Sciatic nerve (tissue), 2 donors: ENCODE measurements at regions of chr17 and their contacts with region 1.

Region 1: DNA sequence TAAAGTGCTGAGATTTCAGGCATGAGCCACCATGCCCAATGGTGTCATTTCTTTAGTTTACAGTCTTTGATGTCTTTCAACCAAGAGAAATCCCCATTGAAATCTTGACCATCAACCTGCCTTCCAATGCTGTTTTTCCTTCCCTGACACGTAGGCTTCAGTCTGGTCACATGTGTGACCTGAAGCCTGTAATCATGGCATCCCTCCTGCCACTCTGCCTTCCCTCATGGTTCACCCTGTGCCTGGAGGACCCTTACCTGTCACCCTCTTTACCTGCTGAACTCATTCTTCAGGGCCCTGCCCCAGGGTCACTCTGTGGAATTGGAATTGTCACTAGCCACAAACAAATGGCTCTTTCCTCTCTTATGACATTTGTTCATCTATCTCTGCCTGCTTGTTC is 18.1 kb upstream of the ARHGAP23 start:
- DNase-seq: no peak
- ATAC-seq: no peak

Region 2: DNA sequence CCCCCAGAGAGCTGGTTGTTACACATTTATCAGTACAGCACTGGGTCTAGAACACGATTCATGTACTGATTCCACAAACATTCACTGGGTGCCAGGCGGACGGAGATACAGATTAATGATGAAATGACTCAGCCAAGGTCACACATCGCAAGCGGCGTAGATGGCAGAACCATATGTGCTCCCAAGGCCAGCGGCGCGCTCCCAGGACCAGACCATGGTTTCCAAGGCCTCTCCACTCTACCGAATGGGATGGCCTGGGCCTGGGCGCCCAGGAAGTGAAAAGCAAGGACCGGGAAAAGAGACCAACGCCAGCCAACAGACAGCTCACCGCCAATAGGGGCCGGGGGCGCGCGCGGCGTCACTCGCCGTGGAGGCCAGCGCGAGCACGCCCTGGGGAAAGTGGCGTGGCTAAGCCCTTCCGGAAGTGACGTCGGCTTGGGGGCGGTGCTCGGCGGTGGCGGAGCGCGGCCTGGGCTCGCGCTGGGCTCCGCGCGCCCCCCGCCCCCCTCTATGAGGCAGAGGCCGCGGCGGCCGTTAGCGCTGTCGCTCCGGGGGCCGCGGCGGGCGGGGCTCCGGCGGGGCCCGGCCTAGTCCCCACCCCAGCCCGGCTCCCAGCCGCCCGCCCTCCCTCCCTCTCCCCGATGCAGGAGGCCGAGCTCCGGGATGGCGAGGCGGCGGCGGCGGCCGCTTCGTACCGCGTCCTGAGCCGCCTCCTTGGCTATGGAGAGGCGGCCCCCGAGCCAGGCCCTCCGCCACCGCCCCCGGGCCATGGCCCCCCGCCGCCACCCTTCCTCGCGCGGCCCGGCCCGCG is 58.6 kb before region 1 on chr17 and contains the start of gene SOCS7:
- intact Hi-C with region 1: loop called (anchors 5 kb)
- DNase-seq: peak; percentile 98
- ATAC-seq: peak; percentile 98
- total RNA-seq, gene SOCS7: 24.6 TPM

Region 3: GRCh38 chr17:38454516-38454915 is 44.3 kb after region 1 on chr17:
- intact Hi-C with region 1: no loop called
- DNase-seq: no peak
- ATAC-seq: peak; percentile 59